ENCODE measurements at regions of chr15 and their contacts with region 1.

Region 1: GRCh38 chr15:75738647-75739331 is 26.1 kb upstream of the CSPG4 start:
- DNase-seq: peak; percentile 88
- H3K4me3 Mint-ChIP-seq: peak overlapping the region; percentile 86
- H3K27ac Mint-ChIP-seq: peak overlapping the region; percentile 23
- H3K4me1 Mint-ChIP-seq: peaks cover 7% of the 10 kb centered on the region
- H3K27me3 Mint-ChIP-seq: peaks cover 32% of the 10 kb centered on the region

Region 2: GRCh38 chr15:75921729-75922703 is 183.2 kb after region 1 on chr15:
- intact Hi-C with region 1: loop called (anchors 10 kb)
- DNase-seq: no peak
- H3K4me3 Mint-ChIP-seq: no peak overlapping the region
- H3K27ac Mint-ChIP-seq: no peak overlapping the region
- H3K4me1 Mint-ChIP-seq: peaks cover 25% of the 10 kb centered on the region
- H3K27me3 Mint-ChIP-seq: no peaks in the 10 kb centered on the region